ENCODE measurements at regions of chr3 and their contacts with region 1.

Region 1: GRCh38 chr3:46909535-46910442 is 32.3 kb downstream of the PTH1R start:
- DNase-seq: peak; percentile 92
- CTCF ChIP-seq: peak; percentile 83

Region 2: GRCh38 chr3:46705022-46705530 is 204.7 kb before region 1 on chr3:
- CTCF ChIA-PET with region 1: interaction called, 12 read pairs
- POLR2A ChIA-PET with region 1: no interaction called
- DNase-seq: peak; percentile 85
- CTCF ChIP-seq: peak; percentile 98

Region 3: GRCh38 chr3:46866720-46867549 is 42.9 kb before region 1 on chr3:
- CTCF ChIA-PET with region 1: interaction called, 19 read pairs
- POLR2A ChIA-PET with region 1: no interaction called
- DNase-seq: peak; percentile 87
- CTCF ChIP-seq: peak; percentile 96

Region 4: DNA sequence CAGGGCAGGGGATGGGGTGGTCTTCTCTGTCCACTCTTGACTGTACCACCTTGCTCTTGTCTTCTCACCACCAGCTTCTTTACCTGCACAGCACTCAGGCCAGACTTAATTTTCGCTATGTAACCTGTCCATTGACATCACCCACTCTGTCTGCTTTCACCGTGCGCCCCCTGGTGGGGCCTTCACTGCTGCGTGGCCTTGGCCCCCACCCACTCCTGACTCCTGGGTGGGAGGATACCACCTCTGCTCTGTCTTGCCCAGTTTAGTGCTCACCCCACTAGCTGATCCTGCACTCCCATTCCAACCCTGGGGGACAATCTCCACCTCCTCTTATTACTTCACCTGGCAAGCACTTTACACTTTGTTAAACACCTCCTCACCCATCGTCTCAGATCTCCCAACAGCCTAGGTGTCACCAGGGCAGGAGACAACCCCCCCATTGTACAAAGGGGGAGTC is 14.6 kb before region 1 on chr3:
- CTCF ChIA-PET with region 1: interaction called, 21 read pairs
- POLR2A ChIA-PET with region 1: no interaction called
- DNase-seq: peak; percentile 82
- CTCF ChIP-seq: peak; percentile 83

Region 5: DNA sequence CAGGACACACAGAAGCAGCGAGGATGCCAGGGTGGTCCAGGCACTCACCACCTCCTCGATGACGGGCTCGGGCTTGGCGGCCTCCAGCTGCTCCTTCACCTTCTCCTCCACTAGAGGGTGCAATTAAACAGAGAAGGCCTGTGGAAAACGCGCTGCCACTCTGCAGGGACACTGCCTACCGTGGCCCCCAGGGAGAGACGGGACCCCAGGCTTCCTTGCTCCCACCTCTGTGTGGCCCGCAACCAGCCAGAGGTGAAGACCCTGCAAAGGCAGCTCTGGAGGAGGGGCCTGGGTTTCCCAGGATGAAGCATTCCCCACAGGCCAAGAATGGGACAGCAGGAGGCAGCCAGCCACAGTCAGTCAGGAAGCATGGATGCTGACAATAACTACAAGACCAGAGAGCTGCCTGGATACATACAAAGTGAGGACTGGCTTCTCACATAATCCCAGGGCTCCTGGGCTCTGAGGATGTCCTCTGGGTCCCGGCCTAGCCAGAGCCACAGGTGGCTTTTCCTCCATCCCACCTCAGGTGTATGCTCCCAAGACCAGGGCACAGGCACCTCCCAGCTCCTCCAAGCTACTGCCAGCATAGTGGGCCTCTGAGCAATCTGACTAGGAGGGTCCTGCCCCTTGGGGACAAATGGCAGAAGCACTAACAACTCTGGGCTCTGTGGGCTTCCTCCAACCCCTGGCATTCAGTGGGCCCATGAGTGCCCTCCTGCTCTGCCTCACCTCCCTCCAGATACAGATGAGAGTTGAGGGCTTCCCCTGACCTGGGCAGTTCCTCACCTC is 14.0 kb after region 1 on chr3:
- CTCF ChIA-PET with region 1: interaction called, 24 read pairs
- POLR2A ChIA-PET with region 1: no interaction called
- DNase-seq: peak; percentile 76
- CTCF ChIP-seq: peak; percentile 44

Region 6: GRCh38 chr3:46935168-46935858 is 25.5 kb after region 1 on chr3:
- CTCF ChIA-PET with region 1: interaction called, 17 read pairs
- POLR2A ChIA-PET with region 1: no interaction called
- DNase-seq: no peak
- CTCF ChIP-seq: no peak

Region 7: GRCh38 chr3:47016934-47017435 is 107.2 kb after region 1 on chr3:
- CTCF ChIA-PET with region 1: no interaction called
- POLR2A ChIA-PET with region 1: no interaction called
- DNase-seq: peak; percentile 35
- CTCF ChIP-seq: no peak